ENCODE measurements at regions of chr20 and their contacts with region 1.

Region 1: DNA sequence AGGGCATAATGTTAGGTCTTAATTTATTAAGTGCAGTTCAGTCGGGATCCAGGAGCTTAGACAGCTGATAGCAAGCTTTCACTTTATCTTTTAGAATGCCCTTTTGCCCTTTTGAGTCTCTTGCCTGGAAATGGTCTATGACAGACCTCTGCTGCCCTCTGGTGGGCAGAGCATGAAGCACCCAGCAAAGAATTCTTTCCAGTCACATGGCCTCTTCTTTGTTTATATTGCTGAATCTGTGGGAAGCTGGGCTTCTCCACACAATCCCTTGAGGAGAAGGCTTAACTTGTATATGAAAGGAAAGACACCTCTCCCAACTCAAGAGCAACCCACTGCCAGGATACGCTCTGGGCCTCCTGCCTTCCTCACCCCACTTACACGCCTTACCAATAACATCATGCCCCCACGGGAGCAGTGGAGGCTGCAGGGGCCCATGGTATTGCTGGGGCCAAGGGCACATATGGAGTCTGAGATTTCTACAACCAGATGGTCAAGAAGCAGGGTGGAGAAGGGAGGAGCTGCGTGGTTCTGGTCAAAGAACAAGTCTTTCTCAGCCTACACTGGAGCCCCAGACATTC is 20.4 kb downstream of the WFDC3 start:
- DNase-seq: peak; percentile 81
- H3K27ac ChIP-seq: no peak overlapping the region
- CTCF ChIP-seq: peak; percentile 99

Region 2: GRCh38 chr20:45322952-45323383 is 448.3 kb before region 1 on chr20:
- CTCF ChIA-PET with region 1: interaction called, 37 read pairs
- POLR2A ChIA-PET with region 1: no interaction called
- DNase-seq: no peak
- H3K27ac ChIP-seq: peak overlapping the region; percentile 38
- CTCF ChIP-seq: peak; percentile 71

Region 3: GRCh38 chr20:45373353-45374100 is 397.7 kb before region 1 on chr20:
- CTCF ChIA-PET with region 1: interaction called, 10 read pairs
- POLR2A ChIA-PET with region 1: interaction called, 5 read pairs
- DNase-seq: peak; percentile 93
- H3K27ac ChIP-seq: peak overlapping the region; percentile 51
- CTCF ChIP-seq: peak; percentile 98

Region 4: DNA sequence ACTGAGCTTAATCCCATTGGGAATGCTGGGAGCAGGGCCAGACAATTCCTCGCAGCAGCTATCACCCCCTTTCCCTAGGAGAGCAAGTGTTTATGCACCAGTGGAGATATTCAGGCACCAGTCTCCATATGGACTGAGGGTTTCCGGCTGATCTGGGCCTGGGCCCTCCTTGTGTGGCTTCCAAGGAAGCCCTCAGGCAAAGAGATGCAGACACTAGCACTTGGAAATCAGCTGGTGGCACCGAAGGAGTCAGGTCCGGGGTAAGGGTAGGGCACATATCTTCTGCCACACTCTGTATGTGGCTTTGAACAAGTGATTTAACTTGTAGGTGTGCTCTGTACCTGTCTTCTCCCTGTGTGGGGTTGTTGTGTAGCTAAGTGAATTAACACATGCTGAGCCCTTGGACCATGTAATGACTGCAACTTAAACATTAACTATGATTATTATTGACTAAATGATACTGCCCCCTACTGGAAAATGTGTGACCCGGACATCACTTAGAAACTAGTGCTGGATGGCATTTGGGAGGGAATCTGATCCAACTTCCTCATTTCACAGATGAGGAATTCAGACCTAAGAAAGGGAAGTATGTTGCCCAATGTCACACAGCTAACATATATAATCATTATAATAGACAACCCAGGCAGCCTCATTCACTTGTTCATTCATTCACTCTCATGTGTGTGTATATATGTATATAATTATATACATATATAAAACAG is 321.0 kb before region 1 on chr20:
- CTCF ChIA-PET with region 1: interaction called, 14 read pairs
- POLR2A ChIA-PET with region 1: no interaction called
- DNase-seq: no peak
- H3K27ac ChIP-seq: no peak overlapping the region
- CTCF ChIP-seq: peak; percentile 37

Region 5: GRCh38 chr20:45518282-45518681 is 253.0 kb before region 1 on chr20:
- CTCF ChIA-PET with region 1: interaction called, 10 read pairs
- POLR2A ChIA-PET with region 1: no interaction called
- DNase-seq: peak; percentile 95
- H3K27ac ChIP-seq: no peak overlapping the region
- CTCF ChIP-seq: no peak

Region 6: GRCh38 chr20:45592574-45593189 is 178.6 kb before region 1 on chr20:
- CTCF ChIA-PET with region 1: interaction called, 12 read pairs
- POLR2A ChIA-PET with region 1: interaction called, 4 read pairs
- DNase-seq: peak; percentile 50
- H3K27ac ChIP-seq: no peak overlapping the region
- CTCF ChIP-seq: peak; percentile 90